ENCODE measurements at regions of chr5 and their contacts with region 1.

Region 1: GRCh38 chr5:148998174-148998797 is 64.6 kb downstream of the SH3TC2 start:
- DNase-seq: peak; percentile 46 to 54
- H3K4me3 ChIP-seq: no peak overlapping the region
- H3K27ac ChIP-seq: no peak overlapping the region
- H3K4me1 ChIP-seq: peaks cover 46% of the 10 kb centered on the region
- H3K27me3 ChIP-seq: no peaks in the 10 kb centered on the region
- CTCF ChIP-seq: peak; percentile 85

Region 2: GRCh38 chr5:148343046-148343408 is 655.3 kb before region 1 on chr5:
- CTCF ChIA-PET with region 1: no interaction called
- POLR2A ChIA-PET with region 1: interaction called, 13 read pairs
- intact Hi-C with region 1: no loop called
- DNase-seq: peak; percentile 67 to 84
- H3K4me3 ChIP-seq: peak overlapping the region; percentile 33; the same call in 1 of the 2 replicates
- H3K27ac ChIP-seq: peak overlapping the region; percentile 93
- H3K4me1 ChIP-seq: peaks cover 24% of the 10 kb centered on the region
- H3K27me3 ChIP-seq: no peaks in the 10 kb centered on the region
- CTCF ChIP-seq: no peak

Region 3: DNA sequence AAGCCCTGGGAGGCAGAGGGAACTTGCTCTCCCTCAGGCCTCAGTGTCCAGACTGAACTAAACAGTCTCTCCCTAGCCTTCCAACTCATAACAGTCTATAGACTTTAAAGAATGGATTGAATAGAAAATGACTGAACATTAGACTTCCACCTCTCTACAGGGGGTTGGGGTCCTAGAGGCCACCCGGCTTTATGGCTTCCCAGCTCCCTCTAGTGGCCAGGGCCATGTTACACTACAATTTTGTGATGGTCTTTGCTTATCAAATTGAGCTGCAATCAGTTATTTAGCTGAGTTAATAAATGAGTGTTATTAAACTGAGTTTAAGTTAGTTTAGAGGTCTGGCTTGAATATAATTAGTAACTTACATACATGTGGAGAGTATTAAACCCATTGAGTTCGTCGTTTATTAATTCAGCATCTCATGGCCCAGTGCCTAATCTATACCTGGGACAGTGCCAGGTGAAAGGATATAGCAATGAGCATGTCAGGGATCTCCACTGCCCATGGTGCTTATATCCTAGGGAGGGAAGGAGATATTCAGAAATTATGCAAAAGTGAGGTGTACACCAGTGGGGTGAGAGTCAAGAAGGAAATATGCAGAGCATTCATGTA is 40.6 kb before region 1 on chr5:
- CTCF ChIA-PET with region 1: interaction called, 4 read pairs
- POLR2A ChIA-PET with region 1: interaction called, 3 read pairs
- intact Hi-C with region 1: loop called (anchors 2 kb)
- DNase-seq: peak; percentile 35 to 45
- H3K4me3 ChIP-seq: no peak overlapping the region
- H3K27ac ChIP-seq: no peak overlapping the region
- H3K4me1 ChIP-seq: peaks cover 35% of the 10 kb centered on the region
- H3K27me3 ChIP-seq: no peaks in the 10 kb centered on the region
- CTCF ChIP-seq: peak; percentile 97

Region 4: GRCh38 chr5:148979104-148979723 is 19.1 kb before region 1 on chr5:
- CTCF ChIA-PET with region 1: interaction called, 6 read pairs
- POLR2A ChIA-PET with region 1: interaction called, 16 read pairs
- intact Hi-C with region 1: loop called (anchors 1 kb)
- DNase-seq: peak; percentile 84 to 85
- H3K4me3 ChIP-seq: peak overlapping the region; percentile 32; the same call in 1 of the 2 replicates
- H3K27ac ChIP-seq: peak overlapping the region; percentile 99
- H3K4me1 ChIP-seq: peaks cover 79% of the 10 kb centered on the region
- H3K27me3 ChIP-seq: no peaks in the 10 kb centered on the region
- CTCF ChIP-seq: no peak

Region 5: GRCh38 chr5:149035372-149035790 is 37.1 kb after region 1 on chr5:
- CTCF ChIA-PET with region 1: interaction called, 18 read pairs
- POLR2A ChIA-PET with region 1: no interaction called
- intact Hi-C with region 1: loop called (anchors 1 kb)
- DNase-seq: peak; percentile 66 to 79
- H3K4me3 ChIP-seq: no peak overlapping the region
- H3K27ac ChIP-seq: peak overlapping the region; percentile 1; the same call in 1 of the 2 replicates
- H3K4me1 ChIP-seq: peaks cover 58% of the 10 kb centered on the region
- H3K27me3 ChIP-seq: no peaks in the 10 kb centered on the region
- CTCF ChIP-seq: peak; percentile 90

Region 6: GRCh38 chr5:149114403-149115312 is 116.4 kb after region 1 on chr5:
- CTCF ChIA-PET with region 1: interaction called, 14 read pairs
- POLR2A ChIA-PET with region 1: no interaction called
- intact Hi-C with region 1: loop called (anchors 1 kb)
- DNase-seq: peak; percentile 74 to 82
- H3K4me3 ChIP-seq: peak overlapping the region; percentile 22; the same call in 1 of the 2 replicates
- H3K27ac ChIP-seq: peak overlapping the region; percentile 92
- H3K4me1 ChIP-seq: peaks cover 66% of the 10 kb centered on the region
- H3K27me3 ChIP-seq: no peaks in the 10 kb centered on the region
- CTCF ChIP-seq: peak; percentile 90

Region 7: DNA sequence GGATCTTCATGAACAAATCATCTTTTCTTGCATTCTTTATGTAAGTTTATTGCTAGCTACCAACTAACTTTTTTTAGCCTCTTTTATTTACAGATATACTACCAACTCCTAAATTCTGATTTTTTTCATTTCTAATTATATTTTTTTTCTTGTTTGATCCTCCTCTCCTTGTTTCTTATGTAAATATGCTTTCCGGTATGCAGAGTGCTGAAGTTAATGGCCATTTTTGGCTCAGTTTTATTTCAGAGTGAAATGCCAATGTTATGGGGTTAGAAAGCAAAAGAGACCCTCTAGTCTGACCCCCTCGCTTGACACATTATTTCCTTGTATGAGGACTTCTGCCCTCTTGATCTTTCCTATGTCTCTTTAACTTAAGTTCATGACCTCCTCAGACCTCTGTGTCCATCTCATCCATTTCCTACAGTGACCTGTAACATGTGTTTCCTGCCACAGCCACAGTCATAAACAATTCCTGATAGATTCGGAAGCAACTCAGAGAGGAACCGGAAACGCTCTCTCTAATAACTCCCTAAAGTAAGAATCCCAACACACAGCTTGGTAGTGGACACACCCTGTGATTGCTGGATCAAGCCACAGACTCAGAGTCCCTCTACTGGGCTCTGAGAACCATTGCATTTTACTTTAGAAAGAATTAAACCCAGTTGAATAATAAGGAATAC is 230.5 kb after region 1 on chr5:
- CTCF ChIA-PET with region 1: no interaction called
- POLR2A ChIA-PET with region 1: no interaction called
- intact Hi-C with region 1: loop called (anchors 1 kb)
- DNase-seq: peak; percentile 40 to 53
- H3K4me3 ChIP-seq: no peak overlapping the region
- H3K27ac ChIP-seq: no peak overlapping the region
- H3K4me1 ChIP-seq: peaks cover 18% of the 10 kb centered on the region
- H3K27me3 ChIP-seq: no peaks in the 10 kb centered on the region
- CTCF ChIP-seq: peak; percentile 68

Region 8: GRCh38 chr5:149526845-149527580 is 528.7 kb after region 1 on chr5:
- CTCF ChIA-PET with region 1: no interaction called
- POLR2A ChIA-PET with region 1: no interaction called
- intact Hi-C with region 1: no loop called
- DNase-seq: no peak
- H3K4me3 ChIP-seq: no peak overlapping the region
- H3K27ac ChIP-seq: no peak overlapping the region
- H3K4me1 ChIP-seq: peaks cover 22% of the 10 kb centered on the region
- H3K27me3 ChIP-seq: no peaks in the 10 kb centered on the region
- CTCF ChIP-seq: no peak